Sciatic nerve (tissue), 2 donors: ENCODE measurements at regions of chr20 and their contacts with region 1.

Region 1: DNA sequence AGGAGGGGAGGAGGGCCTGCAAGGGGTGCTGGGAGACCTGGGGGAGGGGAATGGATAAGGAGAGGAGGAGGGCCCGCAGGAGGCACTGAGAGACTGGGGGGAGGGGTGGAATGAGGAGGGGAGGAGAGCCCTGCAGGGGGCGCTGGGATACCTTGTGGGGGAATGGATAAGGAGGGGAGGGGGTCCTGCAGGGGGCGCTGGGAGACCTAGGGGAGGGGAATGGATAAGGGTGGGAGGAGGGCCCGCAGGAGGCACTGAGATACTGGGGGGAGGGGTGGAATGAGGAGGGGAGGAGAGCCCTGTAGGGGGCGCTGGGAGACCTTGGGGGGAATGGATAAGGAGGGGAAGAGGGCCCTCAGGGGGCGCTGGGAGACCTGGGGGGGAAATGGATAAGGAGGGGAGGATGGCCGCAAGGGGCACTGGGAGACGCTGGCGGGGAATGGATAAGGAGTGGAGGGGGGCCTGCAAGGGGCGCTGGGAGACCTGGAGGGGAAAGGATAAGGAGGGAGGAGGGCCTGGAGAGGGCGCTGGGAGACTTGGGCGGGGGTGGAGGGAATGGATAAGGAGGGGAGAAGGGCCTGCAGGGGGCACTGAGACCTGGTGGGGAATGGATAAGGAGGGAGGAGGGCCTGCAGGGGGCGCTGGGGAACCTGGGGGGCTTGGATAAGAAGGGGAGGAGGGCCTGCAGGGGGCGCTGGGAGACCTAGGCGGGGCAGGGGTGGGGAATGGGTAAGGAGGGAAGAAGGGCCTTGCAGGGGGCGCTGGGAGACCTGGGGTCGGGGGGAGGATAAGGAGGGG is 1.3 kb upstream of the CTCFL start:
- DNase-seq: no peak
- ATAC-seq: no peak

Region 2: GRCh38 chr20:57080788-57081187 is 445.5 kb before region 1 on chr20:
- intact Hi-C with region 1: no loop called
- DNase-seq: no peak
- ATAC-seq: no peak

Region 3: DNA sequence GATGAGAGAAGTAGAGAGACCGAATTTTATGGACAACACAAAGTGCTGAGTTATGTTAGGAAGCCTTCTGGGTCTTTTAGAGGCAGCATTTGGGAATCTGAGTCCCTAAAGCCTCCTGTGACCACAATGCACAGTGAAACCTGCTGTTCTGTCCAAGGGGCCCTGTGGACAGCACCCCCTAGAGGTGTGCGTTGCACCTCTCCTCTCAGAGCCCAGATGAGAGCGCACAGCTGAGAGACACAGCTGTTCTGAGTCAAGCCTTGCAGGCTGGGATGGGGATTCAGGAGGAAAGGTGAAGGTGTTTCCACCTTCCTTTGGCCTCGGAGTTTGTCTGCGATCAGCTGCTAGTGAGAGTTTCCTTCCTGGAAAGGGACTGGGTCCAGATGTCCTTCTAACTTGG is 47.6 kb after region 1 on chr20:
- intact Hi-C with region 1: loop called (anchors 10 kb)
- DNase-seq: no peak
- ATAC-seq: no peak